ENCODE measurements at regions of chr2 and their contacts with region 1.

Region 1: DNA sequence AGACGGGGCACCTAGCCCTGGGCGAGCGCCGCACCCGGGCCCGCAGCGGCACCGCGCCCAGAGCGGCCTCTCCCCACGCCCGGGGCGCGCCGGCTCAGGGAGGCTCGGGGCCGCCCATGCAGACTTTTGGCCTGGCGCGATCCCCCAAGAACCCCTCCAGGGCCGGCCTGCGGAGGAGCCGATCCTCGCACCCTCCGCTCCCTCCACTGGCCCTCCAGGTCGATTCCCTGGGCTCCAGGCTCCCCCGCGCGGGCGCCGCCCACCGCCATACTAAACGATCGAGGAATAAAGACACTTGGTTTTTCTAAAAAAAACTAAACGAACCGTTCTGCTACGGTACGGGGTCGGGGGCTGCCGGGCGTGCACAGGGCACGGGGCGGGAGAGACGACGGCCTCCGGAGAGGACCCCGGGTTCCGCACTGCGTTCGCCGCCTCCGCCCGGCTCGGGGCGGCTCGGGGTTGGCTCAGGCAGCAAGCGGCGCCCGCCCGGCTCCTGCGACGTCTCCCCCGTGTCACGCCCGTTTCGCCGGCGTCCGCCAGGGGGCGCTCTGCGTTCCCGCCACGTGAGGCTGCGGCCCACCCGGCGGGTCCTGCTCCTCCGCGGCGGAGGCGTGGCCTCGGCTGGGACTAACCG is 365 bp upstream of the KHK start:
- DNase-seq: peak; percentile 94 to 100 (median 99)
- ATAC-seq: peak; percentile 96
- H3K4me3 ChIP-seq: peak overlapping the region; percentile 68
- H3K4me3 Mint-ChIP-seq: peak overlapping the region; percentile 75 to 91 (median 86)
- H3K27ac ChIP-seq: peak overlapping the region; percentile 90
- H3K27ac Mint-ChIP-seq: peak overlapping the region; percentile 30 to 91 (median 78)
- H3K4me1 ChIP-seq: peaks cover 18 to 22% of the 10 kb centered on the region in 2 donors
- H3K4me1 Mint-ChIP-seq: peaks cover 13 to 47% (median 29%) of the 10 kb centered on the region in 7 donors
- H3K27me3 ChIP-seq: no peaks in the 10 kb centered on the region
- H3K27me3 Mint-ChIP-seq: no peaks in the 10 kb centered on the region

Region 2: DNA sequence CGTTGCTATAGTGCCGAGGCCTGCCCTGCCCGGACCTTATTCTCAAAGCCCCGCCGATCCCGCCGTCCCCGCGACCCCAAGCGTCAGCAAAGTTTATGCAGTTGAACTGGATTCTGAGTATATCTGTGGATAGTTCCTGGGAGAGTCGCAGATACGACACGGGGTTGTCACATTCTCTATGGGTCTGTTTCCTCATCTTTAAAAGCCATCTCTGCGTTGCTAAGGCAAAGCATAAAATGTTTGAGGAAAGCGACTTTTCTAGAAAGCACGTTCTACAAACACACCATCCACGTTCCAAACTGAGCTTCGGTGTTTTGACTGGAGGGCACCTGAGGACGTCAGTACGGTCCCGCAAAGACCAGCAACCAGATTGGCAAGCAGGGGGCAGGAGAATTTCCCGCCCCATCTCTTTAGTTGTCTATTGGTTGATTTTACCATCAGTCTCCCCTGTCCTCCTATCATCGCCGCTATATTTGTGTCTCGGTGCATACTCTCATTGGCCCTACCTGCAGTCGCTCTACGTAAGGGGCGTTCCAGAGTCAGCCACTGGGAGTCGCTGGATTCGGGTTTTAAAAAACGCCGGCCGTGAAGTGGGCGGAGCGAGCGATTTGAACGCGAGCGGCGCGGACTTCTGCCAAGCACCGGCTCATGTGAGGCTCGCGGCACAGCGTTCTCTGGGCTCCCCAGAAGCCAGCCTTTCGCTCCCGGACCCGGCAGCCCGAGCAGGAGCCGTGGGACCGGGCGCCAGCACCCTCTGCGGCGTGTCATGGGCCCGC is 300.6 kb before region 1 on chr2 and contains the start of gene CENPA:
- CTCF ChIA-PET with region 1: no interaction called
- POLR2A ChIA-PET with region 1: no interaction called
- intact Hi-C with region 1: loop called in 1 of 2 experiments (anchors 5 kb)
- DNase-seq: peak; percentile 86 to 98 (median 96)
- ATAC-seq: peak; percentile 100
- H3K4me3 ChIP-seq: peak within 1 kb of the TSS; percentile 78
- H3K4me3 Mint-ChIP-seq: peak within 1 kb of the TSS; percentile 81 to 97 (median 88)
- H3K27ac ChIP-seq: peak within 1 kb of the TSS; percentile 60
- H3K27ac Mint-ChIP-seq: peak within 1 kb of the TSS; percentile 65 to 97 (median 89)
- H3K4me1 ChIP-seq: peaks cover 0 to 4% of the 10 kb centered on the region in 2 donors
- H3K4me1 Mint-ChIP-seq: peaks cover 10 to 34% (median 11%) of the 10 kb centered on the region in 7 donors
- H3K27me3 ChIP-seq: no peaks in the 10 kb centered on the region
- H3K27me3 Mint-ChIP-seq: peaks cover 0 to 26% (median 24%) of the 10 kb centered on the region in 5 donors
- total RNA-seq, gene CENPA: 0.37 to 25.6 (median 0.73) TPM in 3 of 5 experiments, not detected in the others

Region 3: GRCh38 chr2:27050281-27050995 is 35.8 kb before region 1 on chr2:
- CTCF ChIA-PET with region 1: interaction called, 5 read pairs
- POLR2A ChIA-PET with region 1: interaction called, 106 read pairs
- intact Hi-C with region 1: loop called (anchors 1 kb)
- DNase-seq: peak; percentile 77 to 95 (median 94)
- ATAC-seq: peak; percentile 76
- H3K4me3 ChIP-seq: peak overlapping the region; percentile 99
- H3K4me3 Mint-ChIP-seq: peak overlapping the region; percentile 86 to 100 (median 99)
- H3K27ac ChIP-seq: peak overlapping the region; percentile 84
- H3K27ac Mint-ChIP-seq: peak overlapping the region; percentile 96 to 100 (median 100)
- H3K4me1 ChIP-seq: peaks cover 8 to 15% of the 10 kb centered on the region in 2 donors
- H3K4me1 Mint-ChIP-seq: peaks cover 10 to 34% (median 19%) of the 10 kb centered on the region in 7 donors
- H3K27me3 ChIP-seq: no peaks in the 10 kb centered on the region
- H3K27me3 Mint-ChIP-seq: peaks cover 0 to 8% (median 4%) of the 10 kb centered on the region in 5 donors

Region 4: GRCh38 chr2:27133905-27134780 is 47.9 kb after region 1 on chr2 and contains the start of gene PREB:
- CTCF ChIA-PET with region 1: no interaction called
- POLR2A ChIA-PET with region 1: interaction called, 7 read pairs
- intact Hi-C with region 1: loop called (anchors 1 kb)
- DNase-seq: peak; percentile 92 to 100 (median 97)
- ATAC-seq: peak; percentile 97
- H3K4me3 ChIP-seq: peak within 1 kb of the TSS; percentile 96
- H3K4me3 Mint-ChIP-seq: peak within 1 kb of the TSS; percentile 88 to 97 (median 92)
- H3K27ac ChIP-seq: peak within 1 kb of the TSS; percentile 97
- H3K27ac Mint-ChIP-seq: peak within 1 kb of the TSS; percentile 88 to 99 (median 97)
- H3K4me1 ChIP-seq: peaks cover 12 to 13% of the 10 kb centered on the region in 2 donors
- H3K4me1 Mint-ChIP-seq: peaks cover 10 to 32% (median 21%) of the 10 kb centered on the region in 7 donors
- H3K27me3 ChIP-seq: no peaks in the 10 kb centered on the region
- H3K27me3 Mint-ChIP-seq: peaks cover 0 to 6% (median 0%) of the 10 kb centered on the region in 5 donors
- total RNA-seq, gene PREB: 25.4 to 72.3 (median 53.2) TPM

Region 5: DNA sequence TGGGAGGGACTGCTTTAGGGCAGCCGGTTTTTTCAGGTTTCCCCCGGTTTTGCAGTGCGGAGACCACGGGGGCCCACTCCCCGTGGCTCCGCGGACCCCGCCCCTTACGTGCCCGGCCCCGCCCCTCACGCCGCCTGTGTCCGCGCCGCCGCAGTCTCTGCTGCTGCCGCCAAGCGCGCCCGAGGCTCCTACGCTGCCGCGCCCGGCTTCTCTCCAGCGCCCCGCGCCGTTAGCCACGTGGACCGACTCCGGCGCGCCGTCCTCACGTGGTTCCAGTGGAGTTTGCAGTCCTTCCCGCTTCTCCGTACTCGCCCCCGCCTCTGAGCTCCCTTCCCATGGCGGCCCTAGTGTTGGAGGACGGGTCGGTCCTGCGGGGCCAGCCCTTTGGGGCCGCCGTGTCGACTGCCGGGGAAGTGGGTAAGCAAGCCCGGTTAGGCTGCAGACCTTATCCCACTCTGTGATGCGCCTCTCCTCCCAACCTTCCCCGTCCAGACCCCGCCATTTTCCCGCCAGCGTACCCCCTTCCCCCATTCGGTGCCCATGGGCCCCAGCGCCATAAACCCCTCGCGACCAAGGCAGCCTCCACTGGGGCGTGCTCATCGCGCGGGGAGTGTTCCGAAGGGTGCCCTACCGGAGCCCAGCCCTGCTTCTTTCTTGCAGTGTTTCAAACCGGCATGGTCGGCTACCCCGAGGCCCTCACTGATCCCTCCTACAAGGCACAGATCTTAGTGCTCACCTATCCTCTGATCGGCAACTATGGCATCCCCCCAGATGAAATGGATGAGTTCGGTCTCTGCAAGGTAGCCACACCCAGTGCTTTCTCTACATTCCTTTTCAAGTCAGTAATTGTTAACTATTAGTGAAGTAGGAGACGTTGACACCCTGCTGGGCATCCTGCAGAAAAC is 131.3 kb after region 1 on chr2 and contains the start of gene CAD:
- CTCF ChIA-PET with region 1: no interaction called
- POLR2A ChIA-PET with region 1: interaction called, 16 read pairs
- intact Hi-C with region 1: loop called (anchors 1 kb)
- DNase-seq: peak; percentile 71 to 90 (median 80)
- ATAC-seq: peak; percentile 87
- H3K4me3 ChIP-seq: peak within 1 kb of the TSS; percentile 68
- H3K4me3 Mint-ChIP-seq: peak within 1 kb of the TSS; percentile 90 to 98 (median 96)
- H3K27ac ChIP-seq: peak within 1 kb of the TSS; percentile 85
- H3K27ac Mint-ChIP-seq: peak within 1 kb of the TSS; percentile 86 to 96 (median 94)
- H3K4me1 ChIP-seq: peaks cover 19 to 24% of the 10 kb centered on the region in 2 donors
- H3K4me1 Mint-ChIP-seq: peaks cover 26 to 52% (median 45%) of the 10 kb centered on the region in 7 donors
- H3K27me3 ChIP-seq: no peaks in the 10 kb centered on the region
- H3K27me3 Mint-ChIP-seq: no peaks in the 10 kb centered on the region
- total RNA-seq, gene CAD: 34.4 to 65.7 (median 45.4) TPM

Region 6: GRCh38 chr2:27322766-27323595 is 236.8 kb after region 1 on chr2 and contains the start of gene MPV17:
- CTCF ChIA-PET with region 1: no interaction called
- POLR2A ChIA-PET with region 1: interaction called, 3 read pairs
- intact Hi-C with region 1: loop called in 1 of 2 experiments (anchors 1 kb)
- DNase-seq: peak; percentile 65 to 87 (median 82)
- ATAC-seq: peak; percentile 98
- H3K4me3 ChIP-seq: peak within 1 kb of the TSS; percentile 99
- H3K4me3 Mint-ChIP-seq: peak within 1 kb of the TSS; percentile 91 to 100 (median 99)
- H3K27ac ChIP-seq: peak within 1 kb of the TSS; percentile 95
- H3K27ac Mint-ChIP-seq: peak within 1 kb of the TSS; percentile 93 to 100 (median 99)
- H3K4me1 ChIP-seq: peaks cover 17 to 22% of the 10 kb centered on the region in 2 donors
- H3K4me1 Mint-ChIP-seq: peaks cover 14 to 30% (median 23%) of the 10 kb centered on the region in 7 donors
- H3K27me3 ChIP-seq: no peaks in the 10 kb centered on the region
- H3K27me3 Mint-ChIP-seq: no peaks in the 10 kb centered on the region
- total RNA-seq, gene MPV17: 55.7 to 119 (median 94.4) TPM

Measured in naive thymus-derived CD4-positive, alpha-beta T cell (primary cell).